Psoas muscle (tissue), 8 donors: ENCODE measurements at regions of chr6 and their contacts with region 1.

Region 1: DNA sequence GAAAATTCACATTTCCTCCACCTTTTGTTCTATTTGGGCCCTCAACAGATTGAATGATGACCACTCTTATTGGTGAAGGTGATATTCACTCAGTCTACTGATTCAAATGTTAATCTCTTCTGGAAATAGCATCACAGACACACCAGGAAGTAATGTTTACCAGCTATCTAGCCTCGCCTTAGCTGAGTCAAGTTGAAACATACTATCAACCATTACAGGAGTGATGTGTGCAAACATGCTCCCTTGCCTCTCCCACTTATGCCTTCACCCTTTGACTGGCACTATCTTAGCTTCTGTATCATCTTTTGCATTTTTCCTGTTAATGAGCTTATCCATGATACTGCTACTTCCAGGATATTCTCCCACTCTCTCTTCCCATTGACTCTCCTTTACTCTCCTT is 191.9 kb downstream of the CENPW start:
- DNase-seq: no peak
- ATAC-seq: no peak
- H3K4me3 ChIP-seq: no peak overlapping the region
- H3K27ac ChIP-seq: no peak overlapping the region
- H3K4me1 ChIP-seq: no peaks in the 10 kb centered on the region
- H3K27me3 ChIP-seq: no peaks in the 10 kb centered on the region
- CTCF ChIP-seq: no peak

Region 2: GRCh38 chr6:126147291-126147815 is 384.5 kb before region 1 on chr6:
- intact Hi-C with region 1: loop called in 1 of 2 experiments (anchors 5 kb)
- DNase-seq: no peak
- ATAC-seq: no peak
- H3K4me3 ChIP-seq: no peak overlapping the region
- H3K27ac ChIP-seq: no peak overlapping the region
- H3K4me1 ChIP-seq: no peaks in the 10 kb centered on the region
- H3K27me3 ChIP-seq: no peaks in the 10 kb centered on the region
- CTCF ChIP-seq: no peak

Region 3: GRCh38 chr6:126773112-126773805 is 241.4 kb after region 1 on chr6:
- intact Hi-C with region 1: loop called in 1 of 2 experiments (anchors 10 kb)
- DNase-seq: no peak
- ATAC-seq: peak in 2 of 4 donors; percentile 75
- H3K4me3 ChIP-seq: no peak overlapping the region
- H3K27ac ChIP-seq: no peak overlapping the region
- H3K4me1 ChIP-seq: no peaks in the 10 kb centered on the region
- H3K27me3 ChIP-seq: no peaks in the 10 kb centered on the region
- CTCF ChIP-seq: no peak